ENCODE measurements at regions of chr1 and their contacts with region 1.

Region 1: DNA sequence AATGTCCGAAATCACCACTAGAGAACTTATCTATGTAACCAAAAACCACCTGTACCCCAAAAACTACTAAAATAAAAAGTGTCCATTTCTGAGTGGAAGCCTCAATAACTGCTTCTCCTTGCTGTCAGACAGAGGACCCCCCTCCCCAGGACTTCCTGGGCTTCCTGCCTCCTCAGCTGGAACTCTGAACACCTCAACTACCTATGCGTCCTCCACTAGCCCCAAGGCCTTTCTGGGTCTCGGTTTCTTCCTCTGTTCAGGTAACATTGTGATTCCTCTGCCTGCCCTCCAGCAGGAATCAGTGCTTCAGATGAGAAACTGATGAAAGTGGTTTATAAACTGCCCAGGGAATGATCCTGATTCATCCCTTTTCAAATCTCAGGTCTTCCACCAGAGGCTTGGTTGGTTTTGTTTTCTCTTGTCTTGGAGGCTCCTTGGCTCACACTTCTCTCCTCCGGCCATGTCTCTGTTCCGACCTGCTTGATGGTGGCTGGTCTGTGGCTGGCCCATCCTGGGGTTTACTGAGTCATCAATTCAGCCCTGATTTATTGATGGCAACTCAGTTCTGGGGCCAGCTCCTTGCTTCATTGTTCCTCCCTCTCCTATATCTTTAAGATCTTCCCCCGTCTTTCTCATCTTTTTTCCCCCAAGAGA is 56.5 kb upstream of the SLC2A1 start:
- DNase-seq: no peak
- H3K4me3 ChIP-seq: no peak overlapping the region
- H3K27ac ChIP-seq: no peak overlapping the region
- H3K27me3 ChIP-seq: peaks cover 24% of the 10 kb centered on the region
- CTCF ChIP-seq: no peak

Region 2: DNA sequence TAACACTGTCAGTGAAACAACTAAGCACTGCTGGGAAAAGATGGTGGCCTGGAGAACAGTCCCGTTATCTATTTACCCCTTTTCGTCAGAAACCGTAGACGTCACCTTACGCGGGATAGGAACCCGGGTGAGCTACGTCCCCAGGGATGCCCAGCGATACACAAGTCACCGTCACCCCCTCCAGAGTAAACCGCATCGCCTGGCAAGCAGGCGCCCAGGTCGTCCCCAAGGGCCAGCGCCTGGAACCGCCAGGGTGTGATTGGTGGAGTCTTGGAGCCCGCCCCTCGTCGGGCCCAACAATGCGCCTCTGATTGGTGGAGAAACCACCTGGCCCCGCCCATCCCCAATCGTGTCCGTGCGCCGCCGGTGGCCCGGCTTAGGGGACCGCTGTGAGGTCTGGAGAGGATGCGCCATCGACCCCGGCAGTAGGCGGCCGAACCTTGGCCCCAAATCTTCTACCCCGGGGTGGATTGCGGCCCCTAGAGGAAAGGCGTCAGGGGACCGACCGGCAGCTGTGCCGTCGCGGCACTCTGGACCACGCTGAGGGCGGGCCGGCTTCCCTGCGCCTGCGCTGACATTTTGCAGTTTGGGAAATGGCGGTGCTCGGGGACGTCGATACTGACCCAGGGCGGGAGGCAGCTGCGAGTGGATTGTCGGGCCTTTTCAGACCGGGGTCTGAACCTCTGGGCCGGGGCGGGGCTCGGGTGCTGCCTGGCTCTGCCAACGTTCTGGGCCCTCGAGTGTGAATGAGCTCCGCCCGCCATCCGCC is 90.9 kb before region 1 on chr1:
- CTCF ChIA-PET with region 1: no interaction called
- POLR2A ChIA-PET with region 1: interaction called, 11 read pairs
- DNase-seq: peak; percentile 50
- H3K4me3 ChIP-seq: peak overlapping the region; percentile 71
- H3K27ac ChIP-seq: peak overlapping the region; percentile 65
- H3K27me3 ChIP-seq: no peaks in the 10 kb centered on the region
- CTCF ChIP-seq: peak; percentile 23; the same call in 1 of the 2 replicates